Activated T-helper 1 cell treated with anti-CD3 and anti-CD28 coated beads, Interleukin-12 subunit alpha, Interleukin-12 subunit beta, Interleukin-2, Interleukin-4 antibody, amounts not matched to agents 30 ng/mL and 10 ng/mL and 1 ng/mL, durations not matched to agents 14 hours and 24 hours and 36 hours (primary cell): ENCODE measurements at regions of chr6 and their contacts with region 1.

Region 1: GRCh38 chr6:83067448-83068413 is at the start of gene DOP1A:
- DNase-seq: peak; percentile 92
- H3K4me3 Mint-ChIP-seq: peak within 1 kb of the TSS; percentile 89
- H3K27ac Mint-ChIP-seq: peak within 1 kb of the TSS; percentile 89
- H3K4me1 Mint-ChIP-seq: peaks cover 28% of the 10 kb centered on the region
- H3K27me3 Mint-ChIP-seq: no peaks in the 10 kb centered on the region
- total RNA-seq, gene DOP1A: 6.7 and 7.1 TPM in 2 replicates

Region 2: GRCh38 chr6:81752138-81752920 is 1315.4 kb before region 1 on chr6 and contains the start of gene TENT5A:
- intact Hi-C with region 1: loop called (anchors 5 kb)
- DNase-seq: peak; percentile 78
- H3K4me3 Mint-ChIP-seq: peak within 1 kb of the TSS; percentile 88
- H3K27ac Mint-ChIP-seq: peak within 1 kb of the TSS; percentile 72
- H3K4me1 Mint-ChIP-seq: peaks cover 16% of the 10 kb centered on the region
- H3K27me3 Mint-ChIP-seq: peaks cover 43% of the 10 kb centered on the region
- total RNA-seq, gene TENT5A: 0.34 and 0.47 TPM in 2 replicates

Region 3: DNA sequence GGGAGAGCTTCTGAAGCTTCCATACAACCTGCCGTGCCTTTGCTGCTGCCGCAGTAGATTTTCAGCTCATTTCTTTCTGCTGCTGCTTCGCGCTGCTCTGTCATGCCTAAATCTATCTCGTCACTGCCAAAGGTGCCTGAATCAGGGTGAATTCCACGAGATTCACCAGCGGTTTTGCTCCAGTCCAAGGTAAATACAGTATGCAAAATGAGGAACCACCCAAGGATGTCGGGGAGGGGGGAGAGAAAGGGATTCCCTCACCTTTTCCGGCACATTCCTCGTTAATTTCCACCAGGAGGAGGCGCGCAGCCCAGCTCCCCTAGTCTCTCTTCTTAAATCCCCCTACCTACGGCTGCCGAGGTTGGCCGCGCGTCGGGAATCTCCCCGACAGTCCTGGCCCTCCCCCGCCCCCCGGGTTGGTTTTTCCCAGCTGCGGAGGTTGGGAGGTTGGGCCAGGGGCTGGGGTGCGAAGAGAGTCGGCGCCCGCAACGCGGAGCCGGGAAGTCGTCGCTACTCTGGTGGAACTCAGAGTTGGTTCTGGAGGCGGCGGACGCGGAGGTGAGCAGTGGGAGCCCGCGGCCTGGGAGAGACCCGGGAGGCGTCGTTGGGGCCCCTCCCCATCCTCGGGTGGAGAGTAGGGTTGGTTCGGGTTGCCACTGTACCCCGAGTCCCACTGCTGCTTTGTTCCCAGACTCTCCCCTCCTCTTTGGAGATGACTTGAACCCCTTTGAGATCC is 704.2 kb before region 1 on chr6 and contains the start of gene TPBG:
- intact Hi-C with region 1: loop called (anchors 10 kb)
- DNase-seq: no peak
- H3K4me3 Mint-ChIP-seq: peak within 1 kb of the TSS; percentile 61
- H3K27ac Mint-ChIP-seq: no peak within 1 kb of the TSS
- H3K4me1 Mint-ChIP-seq: no peaks in the 10 kb centered on the region
- H3K27me3 Mint-ChIP-seq: peaks cover 47% of the 10 kb centered on the region
- total RNA-seq, gene TPBG: not detected in 2 replicates

Region 4: DNA sequence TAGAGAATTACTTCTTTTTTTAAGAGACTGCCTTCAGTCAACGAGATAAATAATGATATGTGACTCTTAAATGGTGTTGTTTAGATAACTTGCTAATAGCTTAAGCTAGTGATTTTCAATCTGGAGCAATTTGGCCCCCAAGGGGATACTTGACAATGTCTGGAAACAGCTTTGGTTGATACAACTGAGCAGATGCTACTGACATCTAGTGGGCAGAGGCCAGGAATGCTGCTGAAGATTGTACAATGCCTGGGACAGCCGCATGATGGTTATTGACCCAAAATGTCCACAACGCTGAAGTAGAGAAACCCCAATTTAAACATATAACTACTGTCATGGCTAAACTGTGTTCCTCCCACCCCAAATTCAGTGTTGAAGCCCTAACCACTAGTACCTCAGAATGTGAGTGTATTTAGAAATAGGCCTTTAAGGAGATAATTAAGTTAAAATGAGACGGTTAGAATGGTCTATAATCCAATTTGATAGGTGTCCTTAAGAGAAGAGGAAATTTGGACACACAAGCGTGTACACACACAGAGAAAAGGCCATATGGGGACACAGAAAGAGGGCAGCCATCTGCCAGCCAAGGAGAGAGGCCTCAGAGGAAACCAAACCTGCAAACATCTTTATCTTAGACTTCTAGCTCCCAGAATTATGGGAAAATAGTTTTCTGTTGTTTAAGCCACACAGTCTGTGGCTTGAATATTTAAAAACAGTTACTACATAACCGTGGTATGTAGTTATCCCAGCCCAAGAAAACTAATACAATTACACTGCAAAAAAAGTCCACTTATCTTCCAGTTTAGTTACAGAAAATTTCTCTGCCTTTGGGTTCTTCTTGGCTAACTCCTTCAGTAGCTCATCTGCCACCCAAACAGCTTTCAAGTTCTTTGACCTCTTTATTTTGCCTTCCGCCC is 147.7 kb after region 1 on chr6:
- intact Hi-C with region 1: loop called (anchors 1 kb)
- DNase-seq: peak; percentile 40
- H3K4me3 Mint-ChIP-seq: no peak overlapping the region
- H3K27ac Mint-ChIP-seq: no peak overlapping the region
- H3K4me1 Mint-ChIP-seq: no peaks in the 10 kb centered on the region
- H3K27me3 Mint-ChIP-seq: peaks cover 19% of the 10 kb centered on the region

Region 5: DNA sequence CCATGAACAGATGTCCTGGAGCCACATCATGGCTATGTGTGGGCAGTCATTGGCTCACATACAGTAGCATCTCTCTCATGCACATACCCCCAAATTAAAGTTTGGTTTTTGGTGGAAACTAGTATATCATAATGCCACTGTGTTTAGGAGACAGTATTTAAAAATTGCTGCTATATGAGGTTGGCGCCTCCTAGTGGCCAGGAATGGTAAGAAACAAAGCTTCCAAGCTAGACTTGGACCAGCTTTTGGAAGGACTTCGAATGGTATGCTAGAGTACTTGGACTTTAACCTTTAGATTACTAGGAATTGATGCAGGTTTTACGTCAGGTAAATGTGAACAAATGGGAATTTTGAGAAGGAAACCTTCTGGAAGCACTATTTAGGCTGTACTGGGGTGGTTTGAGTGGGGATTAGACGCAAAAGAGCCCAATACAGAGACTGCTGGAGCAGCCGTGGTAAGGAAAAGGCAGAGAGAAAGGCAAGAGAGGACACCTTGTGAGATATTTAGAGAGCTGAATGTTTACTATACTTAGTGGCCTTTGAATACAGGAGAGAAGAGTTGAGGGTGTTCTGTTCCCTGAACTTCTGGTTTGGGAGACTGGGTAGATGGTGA is 468.4 kb after region 1 on chr6:
- intact Hi-C with region 1: loop called (anchors 1 kb)
- DNase-seq: peak; percentile 6
- H3K4me3 Mint-ChIP-seq: no peak overlapping the region
- H3K27ac Mint-ChIP-seq: no peak overlapping the region
- H3K4me1 Mint-ChIP-seq: no peaks in the 10 kb centered on the region
- H3K27me3 Mint-ChIP-seq: peaks cover 2% of the 10 kb centered on the region

Region 6: GRCh38 chr6:84227434-84228197 is 1159.9 kb after region 1 on chr6 and contains the start of gene CEP162:
- intact Hi-C with region 1: loop called (anchors 1 kb)
- DNase-seq: peak; percentile 83
- H3K4me3 Mint-ChIP-seq: peak within 1 kb of the TSS; percentile 98
- H3K27ac Mint-ChIP-seq: peak within 1 kb of the TSS; percentile 86
- H3K4me1 Mint-ChIP-seq: peaks cover 10% of the 10 kb centered on the region
- H3K27me3 Mint-ChIP-seq: peaks cover 5% of the 10 kb centered on the region
- total RNA-seq, gene CEP162: 4.7 and 6.1 TPM in 2 replicates